Naive thymus-derived CD4-positive, alpha-beta T cell (primary cell): ENCODE measurements at regions of chr7 and their contacts with region 1.

Region 1: DNA sequence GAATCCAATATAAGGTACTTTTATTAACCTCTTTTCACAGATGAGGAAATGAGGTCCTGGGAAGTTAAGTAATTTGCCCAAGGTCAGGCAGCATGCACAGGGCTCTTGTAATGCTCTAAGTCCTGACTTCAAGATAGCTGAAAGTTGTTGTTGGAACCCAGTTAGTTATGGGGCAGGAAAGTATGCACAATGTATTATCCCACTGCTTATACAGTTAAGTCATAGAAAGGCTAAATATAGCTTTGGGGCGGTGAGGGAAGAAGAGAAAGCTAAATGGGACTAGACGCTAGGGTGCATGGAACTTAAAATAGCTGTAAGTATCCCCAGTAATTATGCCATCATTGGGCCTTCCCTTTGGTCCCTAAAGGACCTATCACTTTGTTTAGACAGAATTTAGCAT is 9.2 kb downstream of the GLCCI1 start:
- DNase-seq: no peak
- ATAC-seq: no peak
- H3K4me3 ChIP-seq: no peak overlapping the region
- H3K4me3 Mint-ChIP-seq: peak overlapping the region in 3 of 10 donors; percentile 10 to 31 (median 17)
- H3K27ac ChIP-seq: no peak overlapping the region
- H3K27ac Mint-ChIP-seq: peak overlapping the region in 1 of 9 donors; percentile 70
- H3K4me1 ChIP-seq: peaks cover 25 to 45% of the 10 kb centered on the region in 2 donors
- H3K4me1 Mint-ChIP-seq: peaks cover 29 to 93% (median 79%) of the 10 kb centered on the region in 7 donors
- H3K27me3 ChIP-seq: no peaks in the 10 kb centered on the region
- H3K27me3 Mint-ChIP-seq: no peaks in the 10 kb centered on the region

Region 2: GRCh38 chr7:7989133-7989984 is 11.6 kb after region 1 on chr7:
- CTCF ChIA-PET with region 1: interaction called, 4 read pairs
- POLR2A ChIA-PET with region 1: interaction called, 3 read pairs
- intact Hi-C with region 1: loop called in 1 of 2 experiments (anchors 1 kb)
- DNase-seq: no peak
- ATAC-seq: peak; percentile 46
- H3K4me3 ChIP-seq: peak overlapping the region; percentile 17
- H3K4me3 Mint-ChIP-seq: peak overlapping the region; percentile 17 to 87 (median 79)
- H3K27ac ChIP-seq: peak overlapping the region; percentile 52
- H3K27ac Mint-ChIP-seq: peak overlapping the region; percentile 35 to 86 (median 70)
- H3K4me1 ChIP-seq: peaks cover 12 to 24% of the 10 kb centered on the region in 2 donors
- H3K4me1 Mint-ChIP-seq: peaks cover 27 to 71% (median 62%) of the 10 kb centered on the region in 7 donors
- H3K27me3 ChIP-seq: no peaks in the 10 kb centered on the region
- H3K27me3 Mint-ChIP-seq: no peaks in the 10 kb centered on the region

Region 3: DNA sequence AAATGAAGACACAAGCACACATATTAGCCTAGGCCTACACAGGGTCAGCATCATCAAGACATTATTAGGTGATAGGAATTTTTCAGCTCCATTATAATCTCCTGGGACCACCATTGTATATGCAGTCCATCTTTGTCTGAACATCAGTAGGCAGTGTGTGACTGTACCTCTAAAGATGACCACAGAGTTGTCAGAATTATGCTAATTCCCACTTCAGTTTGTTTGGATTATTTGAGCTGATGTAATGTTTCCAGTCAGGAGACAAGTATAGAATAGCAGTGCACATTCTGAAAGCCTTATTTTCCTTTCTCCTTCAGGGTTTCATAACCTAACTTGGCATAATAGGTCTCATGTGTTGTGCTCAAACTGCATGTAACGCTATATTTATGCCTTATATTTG is 762.1 kb after region 1 on chr7:
- CTCF ChIA-PET with region 1: no interaction called
- POLR2A ChIA-PET with region 1: no interaction called
- intact Hi-C with region 1: no loop called
- DNase-seq: no peak
- ATAC-seq: no peak
- H3K4me3 ChIP-seq: no peak overlapping the region
- H3K4me3 Mint-ChIP-seq: no peak overlapping the region
- H3K27ac ChIP-seq: no peak overlapping the region
- H3K27ac Mint-ChIP-seq: no peak overlapping the region
- H3K4me1 ChIP-seq: no peaks in the 10 kb centered on the region
- H3K4me1 Mint-ChIP-seq: no peaks in the 10 kb centered on the region
- H3K27me3 ChIP-seq: no peaks in the 10 kb centered on the region
- H3K27me3 Mint-ChIP-seq: no peaks in the 10 kb centered on the region